Heart right ventricle (tissue), 16 donors: ENCODE measurements at regions of chr5 and their contacts with region 1.

Region 1: DNA sequence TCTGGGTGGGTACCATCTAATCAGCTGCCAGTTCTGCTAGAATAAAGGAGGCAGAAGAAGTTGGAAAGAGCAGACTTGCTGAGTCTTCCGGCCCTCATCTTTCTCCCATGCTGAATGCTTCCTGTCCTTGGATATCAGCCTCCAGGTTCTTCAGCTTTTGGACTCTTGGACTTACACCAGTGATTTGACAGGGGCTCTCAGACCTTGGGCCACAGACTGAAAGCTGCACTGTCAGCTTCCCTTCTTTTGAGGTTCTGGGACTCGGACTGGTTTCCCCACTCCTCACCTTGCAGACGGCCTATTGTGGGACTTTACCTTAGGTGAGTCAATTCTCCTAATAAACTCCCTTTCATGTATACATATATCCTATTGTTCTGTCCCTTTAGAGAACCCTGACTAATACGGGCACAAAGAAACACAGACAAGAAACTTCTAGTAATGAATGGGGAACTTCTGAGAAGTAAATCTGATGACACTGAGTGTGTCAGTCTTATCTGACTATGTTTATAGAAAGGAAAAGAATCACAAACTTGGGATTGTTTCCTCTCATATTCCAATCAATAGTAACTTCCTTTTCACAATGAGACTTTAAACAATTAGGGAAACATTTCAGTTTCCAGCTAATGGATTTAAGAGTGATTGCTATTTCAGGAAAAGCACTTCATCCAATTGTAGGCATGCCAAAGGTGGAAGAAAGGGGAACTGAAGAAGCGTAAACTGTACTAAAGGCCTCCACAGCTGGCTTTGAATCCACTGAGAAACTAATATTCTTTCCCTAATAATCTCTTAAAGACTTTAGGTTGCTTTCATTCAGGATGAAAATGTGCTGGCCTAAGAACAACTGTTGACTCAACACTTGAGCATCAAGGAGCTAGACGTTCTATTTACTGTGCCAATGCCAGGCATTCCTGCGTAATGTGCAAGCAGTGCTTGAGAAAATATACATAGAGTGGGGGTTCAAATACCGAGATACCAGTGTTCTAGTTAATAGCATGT is 127.9 kb upstream of the PTGER4 start:
- DNase-seq: no peak
- ATAC-seq: peak in 4 of 8 donors; percentile 20 to 53 (median 46)
- H3K4me3 ChIP-seq: no peak overlapping the region
- H3K27ac ChIP-seq: peak overlapping the region in 4 of 10 donors; percentile 6 to 54 (median 27)
- H3K4me1 ChIP-seq: peaks cover 0 to 14% (median 8%) of the 10 kb centered on the region in 9 donors
- H3K27me3 ChIP-seq: no peaks in the 10 kb centered on the region
- CTCF ChIP-seq: no peak

Region 2: GRCh38 chr5:40507095-40507494 is 44.7 kb before region 1 on chr5:
- intact Hi-C with region 1: loop called in 1 of 10 experiments (anchors 5 kb)
- DNase-seq: no peak
- ATAC-seq: no peak
- H3K4me3 ChIP-seq: no peak overlapping the region
- H3K27ac ChIP-seq: no peak overlapping the region
- H3K4me1 ChIP-seq: peaks cover 0 to 16% (median 0%) of the 10 kb centered on the region in 9 donors
- H3K27me3 ChIP-seq: no peaks in the 10 kb centered on the region
- CTCF ChIP-seq: peak in 4 of 9 donors; percentile 10 to 15 (median 12)